HEK293 (cell line): ENCODE measurements at regions of chr6 and their contacts with region 1.

Region 1: DNA sequence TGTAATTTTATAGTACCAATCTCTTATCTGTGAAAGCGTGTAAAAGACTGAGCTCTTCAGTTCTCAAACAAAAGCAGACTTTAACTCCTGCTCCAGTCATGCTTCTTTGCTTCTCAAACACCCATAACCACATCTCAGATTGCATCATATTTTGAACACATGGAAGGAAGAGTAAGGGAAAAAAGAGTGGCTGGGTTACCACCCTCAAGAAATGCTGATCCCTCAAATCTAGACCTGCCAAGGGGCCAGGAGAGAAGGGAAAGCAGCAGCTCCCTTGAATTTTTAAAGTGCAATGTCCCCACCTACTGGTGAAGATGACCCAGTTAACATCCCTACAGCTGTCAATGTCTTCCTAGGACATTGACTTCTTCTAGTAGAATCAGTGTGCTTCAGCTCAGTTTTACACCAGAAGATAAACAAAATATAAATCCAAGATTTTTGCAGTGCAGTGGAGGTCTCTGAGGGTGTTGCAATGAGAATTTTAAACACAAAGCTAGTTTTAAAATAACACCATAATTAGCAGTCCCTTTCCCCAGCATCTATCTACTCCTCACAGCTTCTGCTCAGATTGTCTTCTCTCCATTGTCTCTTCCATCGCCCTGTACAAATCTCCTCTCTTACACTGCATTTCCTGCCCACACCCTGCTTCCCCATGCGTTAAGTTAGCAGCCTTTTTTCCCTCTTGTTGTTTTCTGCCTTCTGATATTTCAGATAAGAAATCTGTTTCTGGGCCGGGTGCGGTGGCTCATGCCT is 22.6 kb upstream of the HLA-DQB2 start:
- H3K4me3 ChIP-seq: no peak overlapping the region
- H3K27ac ChIP-seq: no peak overlapping the region
- H3K4me1 ChIP-seq: no peaks in the 10 kb centered on the region
- CTCF ChIP-seq: peak; percentile 41; the same call in 1 of the 2 replicates

Region 2: DNA sequence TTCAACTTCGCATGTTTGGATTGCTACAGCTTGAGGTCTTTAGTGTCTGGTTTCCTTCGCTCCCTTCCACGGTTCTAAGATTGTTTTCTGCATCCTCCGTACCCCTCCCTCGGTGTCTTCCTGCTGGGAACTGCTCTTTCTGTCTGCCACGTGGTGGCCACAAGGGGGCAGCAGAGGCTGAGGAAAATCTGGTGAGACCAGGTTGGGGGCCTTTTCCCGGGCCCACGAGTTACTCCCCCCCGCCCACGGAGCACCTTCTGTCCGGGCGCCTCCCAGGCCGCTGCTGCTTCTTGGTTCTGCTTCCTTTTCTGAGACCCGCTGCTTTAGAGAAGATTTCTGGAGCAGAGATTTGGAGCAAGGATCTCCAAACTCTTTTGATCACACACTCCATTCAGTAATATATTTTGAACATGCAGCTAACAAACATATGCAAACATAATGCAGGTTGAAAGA is 541.0 kb before region 1 on chr6:
- CTCF ChIA-PET with region 1: interaction called, 12 read pairs
- POLR2A ChIA-PET with region 1: no interaction called
- H3K4me3 ChIP-seq: no peak overlapping the region
- H3K27ac ChIP-seq: no peak overlapping the region
- H3K4me1 ChIP-seq: no peaks in the 10 kb centered on the region
- CTCF ChIP-seq: peak; percentile 87

Region 3: DNA sequence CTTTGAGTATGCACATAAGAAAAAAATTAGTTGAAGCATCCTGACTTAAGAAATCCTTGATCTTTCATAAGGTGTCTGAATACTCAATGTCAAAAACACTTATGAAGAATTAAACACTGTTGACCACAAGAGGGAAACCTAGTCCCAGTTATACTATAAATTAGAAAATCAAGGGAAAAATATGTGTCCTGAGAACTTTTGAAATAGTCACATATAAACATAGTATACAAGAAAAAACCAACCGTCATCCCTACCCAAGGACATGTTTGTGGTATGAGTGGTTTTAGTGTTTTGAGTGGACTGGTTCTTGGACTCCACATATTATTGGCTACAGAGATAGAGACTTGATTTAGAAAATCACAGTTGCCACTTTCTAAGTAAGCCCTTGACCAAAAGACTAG is 353.9 kb before region 1 on chr6:
- CTCF ChIA-PET with region 1: interaction called, 46 read pairs
- POLR2A ChIA-PET with region 1: no interaction called
- H3K4me3 ChIP-seq: no peak overlapping the region
- H3K27ac ChIP-seq: no peak overlapping the region
- H3K4me1 ChIP-seq: no peaks in the 10 kb centered on the region
- CTCF ChIP-seq: no peak

Region 4: GRCh38 chr6:32529697-32530429 is 256.1 kb before region 1 on chr6 and contains the start of gene HLA-DRB5:
- CTCF ChIA-PET with region 1: no interaction called
- POLR2A ChIA-PET with region 1: no interaction called
- H3K4me3 ChIP-seq: no peak within 1 kb of the TSS
- H3K27ac ChIP-seq: no peak within 1 kb of the TSS
- H3K4me1 ChIP-seq: no peaks in the 10 kb centered on the region
- CTCF ChIP-seq: no peak

Region 5: DNA sequence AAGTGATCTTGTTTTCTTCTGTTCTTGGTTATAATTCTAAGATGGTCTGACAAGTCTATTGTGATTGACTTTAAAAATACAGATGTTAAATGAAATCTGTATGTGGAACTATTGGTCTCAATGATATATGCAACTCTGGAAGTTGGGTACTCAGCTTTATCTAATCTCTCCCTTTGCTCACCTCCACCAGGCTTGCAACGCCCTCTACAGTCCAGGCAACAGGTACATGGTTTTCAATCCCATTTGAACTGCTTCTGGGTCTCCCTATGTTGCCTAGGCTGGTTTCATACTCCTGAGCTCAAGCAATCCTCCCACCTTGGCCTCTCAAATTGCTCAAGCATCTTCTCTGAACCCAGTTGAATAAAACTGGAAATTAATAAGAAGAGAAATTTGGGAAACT is 93.9 kb before region 1 on chr6:
- CTCF ChIA-PET with region 1: interaction called, 16 read pairs
- POLR2A ChIA-PET with region 1: no interaction called
- H3K4me3 ChIP-seq: no peak overlapping the region
- H3K27ac ChIP-seq: no peak overlapping the region
- H3K4me1 ChIP-seq: no peaks in the 10 kb centered on the region
- CTCF ChIP-seq: 0 out of 2 replicates have a peak, but pooled peaks have one; percentile 22

Region 6: GRCh38 chr6:32716399-32716798 is 69.6 kb before region 1 on chr6:
- CTCF ChIA-PET with region 1: interaction called, 12 read pairs
- POLR2A ChIA-PET with region 1: no interaction called
- H3K4me3 ChIP-seq: no peak overlapping the region
- H3K27ac ChIP-seq: no peak overlapping the region
- H3K4me1 ChIP-seq: no peaks in the 10 kb centered on the region
- CTCF ChIP-seq: no peak

Region 7: GRCh38 chr6:32989396-32989795 is 203.4 kb after region 1 on chr6:
- CTCF ChIA-PET with region 1: no interaction called
- POLR2A ChIA-PET with region 1: no interaction called
- H3K4me3 ChIP-seq: no peak overlapping the region
- H3K27ac ChIP-seq: no peak overlapping the region
- H3K4me1 ChIP-seq: no peaks in the 10 kb centered on the region
- CTCF ChIP-seq: no peak